ENCODE measurements at regions of chr1 and their contacts with region 1.

Region 1: DNA sequence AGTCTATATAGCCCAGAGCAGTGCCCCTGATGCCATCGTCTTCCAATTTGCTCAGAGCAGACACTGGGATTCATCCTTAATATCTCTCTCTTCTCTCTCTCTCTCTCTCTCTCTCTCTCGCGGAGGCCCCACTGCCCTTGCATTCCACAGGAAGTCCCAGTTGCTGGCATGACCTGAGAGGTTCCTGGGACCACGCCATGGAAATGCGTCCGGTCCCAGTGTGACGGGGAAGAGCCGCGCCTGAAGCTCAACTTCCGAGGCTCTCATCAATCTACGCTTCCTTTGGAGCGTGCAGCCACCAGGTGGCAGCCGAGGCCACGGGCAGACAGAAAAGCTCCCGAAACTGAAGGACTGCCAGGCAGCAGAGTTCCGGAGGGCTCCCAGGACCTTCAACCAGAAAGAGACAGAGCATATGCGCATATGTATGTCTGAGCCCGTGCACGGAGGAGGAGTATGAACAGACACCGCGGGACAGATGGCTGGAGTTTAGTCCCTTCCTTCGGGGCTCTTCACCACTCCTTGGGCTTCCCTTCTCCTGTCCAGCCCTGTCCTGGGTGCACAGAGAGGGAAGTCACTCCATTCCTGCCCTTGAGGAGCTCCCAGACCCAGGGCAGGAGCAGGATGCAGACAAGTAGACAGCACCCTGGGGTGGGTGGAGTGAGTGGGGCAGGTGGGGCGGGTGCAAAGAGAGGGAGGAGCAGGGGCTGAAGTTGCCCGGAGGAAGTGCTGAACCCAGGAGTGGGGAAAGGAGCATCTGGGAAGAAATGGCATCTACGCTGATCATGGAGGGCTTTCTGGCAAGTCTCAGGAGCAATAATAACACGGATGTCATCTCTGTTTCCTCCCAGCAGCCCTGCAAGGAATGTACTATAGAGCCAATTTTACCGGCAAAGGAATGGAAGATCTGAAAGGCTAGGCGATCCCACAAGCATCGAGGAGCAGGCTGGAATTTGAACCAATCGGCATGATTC is 10.5 kb downstream of the PDZK1IP1 start:
- DNase-seq: peak; percentile 85 to 99 (median 86)
- ATAC-seq: peak; percentile 61
- H3K4me3 ChIP-seq: peak overlapping the region; percentile 31
- H3K27ac ChIP-seq: peak overlapping the region; percentile 91
- H3K4me1 ChIP-seq: peaks cover 46 to 56% of the 10 kb centered on the region in 2 experiments
- H3K27me3 ChIP-seq: no peaks in the 10 kb centered on the region; a peak in 1 of 5 replicates
- CTCF ChIP-seq: peak; percentile 96 to 99 (median 99)
- EP300 ChIP-seq: peak; percentile 54; the same call in 1 of the 2 replicates
- POLR2A ChIP-seq: peak; percentile 45; the same call in 1 of the 2 replicates
- RAD21 ChIP-seq: peak; percentile 96 to 98

Region 2: GRCh38 chr1:46466477-46467182 is 712.7 kb before region 1 on chr1:
- CTCF ChIA-PET with region 1: no interaction called
- POLR2A ChIA-PET with region 1: no interaction called
- in situ Hi-C with region 1: no loop called
- intact Hi-C with region 1: no loop called
- DNase-seq: peak in 2 of 4 experiments; percentile 49 to 58
- ATAC-seq: peak; percentile 32
- H3K4me3 ChIP-seq: peak overlapping the region; percentile 29
- H3K27ac ChIP-seq: no peak overlapping the region
- H3K4me1 ChIP-seq: peaks cover 6 to 28% of the 10 kb centered on the region in 2 experiments; a peak in 4 of 5 replicates
- H3K27me3 ChIP-seq: peaks cover 0 to 8% of the 10 kb centered on the region in 2 experiments; a peak in 2 of 5 replicates
- CTCF ChIP-seq: no peak
- EP300 ChIP-seq: no peak
- POLR2A ChIP-seq: no peak
- RAD21 ChIP-seq: no peak

Region 3: GRCh38 chr1:46927249-46927835 is 252.0 kb before region 1 on chr1:
- CTCF ChIA-PET with region 1: no interaction called
- POLR2A ChIA-PET with region 1: no interaction called
- in situ Hi-C with region 1: no loop called
- intact Hi-C with region 1: no loop called
- DNase-seq: no peak
- ATAC-seq: no peak
- H3K4me3 ChIP-seq: no peak overlapping the region
- H3K27ac ChIP-seq: no peak overlapping the region
- H3K4me1 ChIP-seq: no peaks in the 10 kb centered on the region
- H3K27me3 ChIP-seq: peaks cover 0 to 4% of the 10 kb centered on the region in 2 experiments; a peak in 1 of 5 replicates
- CTCF ChIP-seq: no peak
- EP300 ChIP-seq: no peak
- POLR2A ChIP-seq: no peak
- RAD21 ChIP-seq: no peak

Region 4: DNA sequence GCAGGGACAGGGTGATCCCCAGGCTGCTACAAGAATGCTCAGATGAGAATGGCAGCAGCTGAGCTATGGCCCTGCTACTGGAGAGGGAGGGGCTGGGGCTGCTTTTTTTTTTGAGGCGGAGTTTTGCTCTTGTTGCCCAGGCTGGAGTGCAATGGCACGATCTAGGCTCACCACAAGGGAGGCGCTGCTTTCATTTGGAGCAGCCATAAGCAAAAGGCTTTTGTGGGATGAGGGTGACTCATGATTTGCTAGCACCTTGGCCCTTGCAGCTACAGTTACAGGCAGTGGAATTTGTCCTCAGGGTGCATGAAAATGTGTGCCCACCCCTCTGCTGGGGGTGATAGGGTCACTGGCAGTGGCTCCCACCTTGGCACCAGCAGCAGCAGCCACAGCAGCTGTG is 74.5 kb before region 1 on chr1:
- CTCF ChIA-PET with region 1: no interaction called
- POLR2A ChIA-PET with region 1: no interaction called
- in situ Hi-C with region 1: no loop called
- intact Hi-C with region 1: loop called (anchors 10 kb)
- DNase-seq: peak in 1 of 4 experiments; percentile 6
- ATAC-seq: peak; percentile 44; the same call in 2 of the 3 replicates
- H3K4me3 ChIP-seq: no peak overlapping the region
- H3K27ac ChIP-seq: no peak overlapping the region
- H3K4me1 ChIP-seq: no peaks in the 10 kb centered on the region
- H3K27me3 ChIP-seq: no peaks in the 10 kb centered on the region; a peak in 1 of 5 replicates
- CTCF ChIP-seq: no peak
- EP300 ChIP-seq: no peak
- POLR2A ChIP-seq: no peak
- RAD21 ChIP-seq: no peak

Region 5: GRCh38 chr1:47231301-47232186 is 52.2 kb after region 1 on chr1:
- CTCF ChIA-PET with region 1: interaction called, 3 read pairs
- POLR2A ChIA-PET with region 1: interaction called, 8 read pairs
- in situ Hi-C with region 1: no loop called
- intact Hi-C with region 1: loop called (anchors 1 kb)
- DNase-seq: peak; percentile 76 to 89 (median 83)
- ATAC-seq: peak; percentile 48
- H3K4me3 ChIP-seq: peak overlapping the region; percentile 62
- H3K27ac ChIP-seq: peak overlapping the region; percentile 97
- H3K4me1 ChIP-seq: peaks cover 34 to 35% of the 10 kb centered on the region in 2 experiments
- H3K27me3 ChIP-seq: no peaks in the 10 kb centered on the region
- CTCF ChIP-seq: no peak
- EP300 ChIP-seq: peak; percentile 66; the same call in 1 of the 2 replicates
- POLR2A ChIP-seq: peak; percentile 96
- RAD21 ChIP-seq: no peak

Region 6: DNA sequence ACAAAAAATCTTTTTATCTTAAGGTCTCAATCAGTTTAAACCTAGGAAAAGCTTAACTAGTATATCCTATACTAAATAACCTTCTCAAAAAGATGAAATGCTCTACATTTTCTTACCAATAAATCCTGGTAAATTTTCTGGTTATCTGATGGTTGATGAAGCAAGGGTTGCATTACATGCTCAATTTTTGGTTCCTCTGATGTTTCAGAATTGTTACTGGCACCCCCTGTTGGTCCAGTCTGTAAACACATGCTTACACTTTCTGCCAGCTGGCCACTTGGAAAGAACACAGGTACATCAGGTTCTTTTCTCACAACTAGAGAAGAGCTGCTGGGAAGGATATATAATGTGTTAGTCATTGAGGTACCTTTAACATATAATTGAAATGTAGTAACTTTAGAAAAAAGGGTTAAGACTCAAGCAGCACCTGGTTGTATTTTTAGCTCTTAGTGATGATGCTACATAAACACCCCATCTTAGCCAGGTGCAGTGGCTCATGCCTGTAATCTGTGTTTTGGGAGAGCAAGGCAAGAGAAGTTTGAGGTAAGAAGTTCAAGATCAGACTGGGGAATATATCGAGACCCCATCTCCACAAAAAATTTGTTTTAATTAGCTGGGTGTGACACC is 83.6 kb after region 1 on chr1:
- CTCF ChIA-PET with region 1: interaction called, 28 read pairs
- POLR2A ChIA-PET with region 1: interaction called, 44 read pairs
- in situ Hi-C with region 1: no loop called
- intact Hi-C with region 1: loop called (anchors 1 kb)
- DNase-seq: peak; percentile 68 to 82 (median 74)
- ATAC-seq: peak; percentile 91
- H3K4me3 ChIP-seq: no peak overlapping the region
- H3K27ac ChIP-seq: no peak overlapping the region
- H3K4me1 ChIP-seq: no peaks in the 10 kb centered on the region
- H3K27me3 ChIP-seq: no peaks in the 10 kb centered on the region
- CTCF ChIP-seq: peak; percentile 84 to 92 (median 85)
- EP300 ChIP-seq: no peak
- POLR2A ChIP-seq: no peak
- RAD21 ChIP-seq: peak; percentile 92 to 94

Region 7: GRCh38 chr1:47333922-47334764 is 154.8 kb after region 1 on chr1:
- CTCF ChIA-PET with region 1: no interaction called
- POLR2A ChIA-PET with region 1: interaction called, 6 read pairs
- in situ Hi-C with region 1: no loop called
- intact Hi-C with region 1: loop called (anchors 5 kb)
- DNase-seq: peak; percentile 85 to 93 (median 90)
- ATAC-seq: peak; percentile 88
- H3K4me3 ChIP-seq: peak overlapping the region; percentile 93
- H3K27ac ChIP-seq: peak overlapping the region; percentile 85
- H3K4me1 ChIP-seq: peaks cover 23 to 28% of the 10 kb centered on the region in 2 experiments; a peak in 4 of 5 replicates
- H3K27me3 ChIP-seq: no peaks in the 10 kb centered on the region
- CTCF ChIP-seq: peak; percentile 41 to 53 (median 51)
- EP300 ChIP-seq: no peak; the same call in 1 of the 2 replicates
- POLR2A ChIP-seq: peak; percentile 81
- RAD21 ChIP-seq: no peak

Region 8: GRCh38 chr1:47424336-47424982 is 245.2 kb after region 1 on chr1:
- CTCF ChIA-PET with region 1: interaction called, 23 read pairs
- POLR2A ChIA-PET with region 1: no interaction called
- in situ Hi-C with region 1: loop called (anchors 10 kb)
- intact Hi-C with region 1: loop called (anchors 1 kb)
- DNase-seq: peak; percentile 55 to 77 (median 70)
- ATAC-seq: peak; percentile 66
- H3K4me3 ChIP-seq: no peak overlapping the region
- H3K27ac ChIP-seq: no peak overlapping the region
- H3K4me1 ChIP-seq: no peaks in the 10 kb centered on the region; a peak in 1 of 5 replicates
- H3K27me3 ChIP-seq: peaks cover 18 to 31% of the 10 kb centered on the region in 2 experiments
- CTCF ChIP-seq: peak; percentile 85 to 94 (median 91)
- EP300 ChIP-seq: no peak
- POLR2A ChIP-seq: no peak
- RAD21 ChIP-seq: peak; percentile 49 to 74; a peak in 3 of 4 replicates

Region 9: DNA sequence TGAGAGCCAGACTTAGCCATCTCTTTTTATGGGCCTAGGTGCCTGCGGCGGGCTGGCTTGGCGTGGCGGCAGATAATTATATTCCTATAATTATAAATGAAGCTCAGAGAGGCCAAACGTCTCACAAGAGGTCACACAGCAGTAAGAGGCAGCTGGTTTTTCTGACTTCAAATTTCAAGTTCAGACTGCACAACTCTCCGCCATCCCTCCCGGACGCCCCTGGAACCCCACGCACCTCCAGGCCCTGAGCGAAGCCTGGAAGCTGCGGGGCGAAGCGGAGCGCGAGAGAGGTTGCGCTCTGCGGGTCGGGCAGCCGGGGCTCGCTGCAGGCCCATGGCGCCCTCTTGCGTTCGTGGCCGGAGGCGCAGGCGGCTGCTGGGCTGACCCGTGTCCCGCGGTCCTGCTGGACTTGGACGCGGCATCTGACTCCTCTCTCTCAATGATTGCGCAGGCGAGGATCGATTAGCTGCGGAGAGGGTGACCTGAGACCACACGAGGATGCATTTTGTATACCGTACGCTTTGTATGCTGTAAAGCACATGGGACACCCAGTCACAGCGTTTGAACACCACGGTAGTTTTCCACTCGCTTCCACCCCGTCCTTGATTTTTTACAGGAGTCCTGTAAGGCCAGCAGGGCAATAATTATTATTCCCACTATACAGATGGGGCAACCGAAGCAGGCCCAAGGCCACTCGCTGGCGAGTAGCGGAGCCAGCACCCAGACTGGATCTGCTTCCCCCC is 531.2 kb after region 1 on chr1:
- CTCF ChIA-PET with region 1: no interaction called
- POLR2A ChIA-PET with region 1: interaction called, 3 read pairs
- in situ Hi-C with region 1: loop called (anchors 10 kb)
- intact Hi-C with region 1: loop called (anchors 5 kb)
- DNase-seq: peak; percentile 71 to 97 (median 94)
- ATAC-seq: peak; percentile 96
- H3K4me3 ChIP-seq: no peak overlapping the region
- H3K27ac ChIP-seq: no peak overlapping the region
- H3K4me1 ChIP-seq: peaks cover 0 to 24% of the 10 kb centered on the region in 2 experiments; a peak in 2 of 5 replicates
- H3K27me3 ChIP-seq: peaks cover 30 to 60% of the 10 kb centered on the region in 2 experiments; a peak in 4 of 5 replicates
- CTCF ChIP-seq: peak; percentile 93 to 98 (median 96)
- EP300 ChIP-seq: no peak
- POLR2A ChIP-seq: no peak
- RAD21 ChIP-seq: peak; percentile 87 to 95

Measured in K562 (cell line).